ENCODE measurements at regions of chr15 and their contacts with region 1.

Region 1: DNA sequence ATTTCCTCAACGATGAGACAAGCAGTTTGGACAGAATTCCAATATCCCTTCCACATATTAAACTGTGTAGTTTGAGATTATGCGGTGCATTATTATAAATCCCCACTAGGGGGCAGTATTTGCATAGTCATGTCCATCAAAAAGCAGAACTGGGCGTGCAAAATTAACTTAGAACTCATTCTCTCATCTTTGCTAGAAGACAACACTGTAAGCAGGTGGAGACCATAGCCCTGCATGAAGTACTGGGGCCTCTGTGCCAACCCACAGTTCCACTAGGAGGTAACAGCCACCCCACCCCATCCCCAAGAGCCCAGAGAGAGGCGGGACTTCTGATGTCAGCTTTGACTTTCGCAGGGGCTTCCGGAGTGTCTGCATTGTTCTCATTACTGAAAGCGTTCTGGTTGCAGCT is 106.6 kb upstream of the TMC3 start:
- DNase-seq: peak; percentile 70
- H3K4me3 ChIP-seq: no peak overlapping the region
- H3K27ac ChIP-seq: no peak overlapping the region
- H3K4me1 ChIP-seq: peaks cover under 1% of the 10 kb centered on the region
- H3K27me3 ChIP-seq: no peaks in the 10 kb centered on the region
- CTCF ChIP-seq: peak; percentile 48 to 66
- POLR2A ChIP-seq: no peak

Region 2: DNA sequence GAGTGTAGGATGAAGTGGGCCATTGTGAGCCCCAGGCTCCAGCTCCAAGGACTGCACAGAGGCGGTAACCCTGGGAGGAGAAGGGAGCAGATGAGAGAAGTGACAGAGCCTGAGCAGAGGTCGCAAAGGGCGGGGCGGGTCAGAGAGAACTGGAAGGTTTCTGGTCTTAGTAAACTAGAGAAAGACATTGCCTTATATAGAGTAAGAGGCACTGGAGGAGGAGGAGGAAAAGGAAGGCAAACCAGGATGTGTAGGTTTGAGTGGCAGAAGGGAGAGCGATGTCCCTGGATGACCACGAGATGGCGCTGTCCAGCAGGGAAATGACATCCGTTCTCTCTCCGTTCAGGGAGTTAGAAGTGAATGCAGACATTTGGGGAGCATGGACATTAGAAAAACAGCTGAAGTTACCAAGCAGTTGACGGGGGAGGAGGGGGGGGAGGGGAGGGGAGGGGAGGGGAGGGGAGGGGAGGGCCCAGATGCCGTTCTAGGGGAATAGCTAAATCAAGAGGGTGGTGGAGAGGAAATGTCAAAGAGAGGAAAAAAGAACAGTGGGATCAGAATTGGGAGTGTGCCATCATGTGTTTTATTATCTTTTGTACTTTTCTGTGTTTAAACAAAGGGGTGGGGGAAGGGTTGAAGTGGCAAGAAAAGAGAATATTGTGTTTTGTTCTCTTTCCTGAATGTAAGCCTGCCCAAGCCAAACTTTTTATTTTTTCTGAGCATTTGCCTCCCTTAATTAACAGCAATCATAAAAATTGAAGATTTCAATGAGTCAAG is 205.5 kb before region 1 on chr15:
- CTCF ChIA-PET with region 1: no interaction called
- POLR2A ChIA-PET with region 1: no interaction called
- dilution Hi-C with region 1: no loop called
- intact Hi-C with region 1: loop called (anchors 5 kb)
- DNase-seq: peak; percentile 75
- H3K4me3 ChIP-seq: no peak overlapping the region
- H3K27ac ChIP-seq: no peak overlapping the region
- H3K4me1 ChIP-seq: no peaks in the 10 kb centered on the region
- H3K27me3 ChIP-seq: peaks cover 7 to 12% of the 10 kb centered on the region in 2 experiments
- CTCF ChIP-seq: peak; percentile 74 to 89
- POLR2A ChIP-seq: no peak

Region 3: DNA sequence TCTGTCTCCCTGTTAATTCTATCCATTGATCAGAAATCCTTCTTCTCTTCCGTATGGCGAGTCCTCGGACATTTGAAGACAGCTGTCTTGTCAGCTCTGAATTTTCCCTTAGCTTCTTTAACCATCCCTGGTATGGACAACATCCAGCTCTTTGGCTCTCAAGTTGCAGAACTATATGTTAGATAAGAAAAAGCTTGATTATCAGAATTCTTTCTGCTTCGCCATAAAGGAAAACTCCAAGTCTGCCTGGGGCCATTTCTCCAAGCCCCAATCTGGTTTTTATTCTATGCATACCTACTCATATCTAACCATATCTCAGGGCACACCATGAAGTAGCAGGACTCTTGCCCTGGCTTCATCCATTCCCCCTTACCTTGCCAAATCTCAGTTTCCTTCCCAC is 109.0 kb after region 1 on chr15:
- CTCF ChIA-PET with region 1: no interaction called
- POLR2A ChIA-PET with region 1: no interaction called
- dilution Hi-C with region 1: no loop called
- intact Hi-C with region 1: loop called (anchors 5 kb)
- DNase-seq: no peak
- H3K4me3 ChIP-seq: no peak overlapping the region
- H3K27ac ChIP-seq: no peak overlapping the region
- H3K4me1 ChIP-seq: no peaks in the 10 kb centered on the region
- H3K27me3 ChIP-seq: no peaks in the 10 kb centered on the region
- CTCF ChIP-seq: no peak
- POLR2A ChIP-seq: no peak

Region 4: DNA sequence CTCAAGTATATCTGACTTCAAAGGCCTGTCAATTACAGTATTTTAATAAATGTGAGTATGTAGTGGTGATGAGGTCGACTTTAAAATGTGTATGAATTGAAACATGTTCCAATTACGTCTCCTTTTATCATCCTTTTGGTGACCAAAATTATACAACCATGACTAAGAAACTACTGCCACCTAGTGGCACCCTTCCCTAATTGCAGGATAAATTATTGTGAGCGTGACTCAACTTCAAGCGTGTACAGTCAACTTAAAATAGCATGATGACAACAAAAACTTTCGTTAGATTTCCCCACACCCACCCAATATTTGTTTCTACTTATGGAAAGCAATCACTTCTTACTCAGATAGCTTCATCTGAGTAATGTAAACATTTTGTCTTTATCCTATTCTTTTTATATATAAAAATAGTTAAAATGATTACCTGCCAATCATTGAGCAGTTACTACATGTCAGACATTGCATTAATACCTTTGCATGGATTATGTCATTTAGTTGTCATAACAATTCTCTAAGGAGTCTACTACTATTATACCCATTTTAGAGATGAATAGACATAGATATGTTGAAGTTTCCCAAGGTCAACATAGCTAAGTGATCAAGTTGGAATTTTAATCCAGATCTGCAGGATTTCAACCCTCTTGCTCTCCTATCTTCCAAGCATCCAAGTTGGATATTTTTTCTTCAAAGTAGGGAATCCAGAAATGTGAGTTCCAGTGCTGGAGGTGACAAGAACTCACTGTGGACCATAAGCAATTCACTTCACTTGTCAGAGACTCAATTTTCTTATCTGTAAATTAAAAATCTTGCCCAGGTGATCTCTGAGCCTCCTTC is 459.2 kb after region 1 on chr15:
- CTCF ChIA-PET with region 1: interaction called, 20 read pairs
- POLR2A ChIA-PET with region 1: no interaction called
- dilution Hi-C with region 1: no loop called
- intact Hi-C with region 1: loop called (anchors 1 kb)
- DNase-seq: peak; percentile 65
- H3K4me3 ChIP-seq: no peak overlapping the region
- H3K27ac ChIP-seq: no peak overlapping the region
- H3K4me1 ChIP-seq: no peaks in the 10 kb centered on the region
- H3K27me3 ChIP-seq: peaks cover 1 to 3% of the 10 kb centered on the region in 2 experiments
- CTCF ChIP-seq: peak; percentile 50 to 61
- POLR2A ChIP-seq: no peak

Region 5: GRCh38 chr15:82197733-82198594 is 717.3 kb after region 1 on chr15:
- CTCF ChIA-PET with region 1: interaction called, 8 read pairs
- POLR2A ChIA-PET with region 1: no interaction called
- dilution Hi-C with region 1: no loop called
- intact Hi-C with region 1: loop called (anchors 1 kb)
- DNase-seq: peak; percentile 74
- H3K4me3 ChIP-seq: no peak overlapping the region
- H3K27ac ChIP-seq: no peak overlapping the region
- H3K4me1 ChIP-seq: no peaks in the 10 kb centered on the region
- H3K27me3 ChIP-seq: no peaks in the 10 kb centered on the region
- CTCF ChIP-seq: peak; percentile 75 to 81
- POLR2A ChIP-seq: no peak

Measured in endothelial cell of umbilical vein (primary cell).